A549 (cell line): ENCODE measurements at regions of chr20 and their contacts with region 1.

Region 1: GRCh38 chr20:16801919-16802911 is 54.1 kb downstream of the OTOR start:
- DNase-seq: peak; percentile 41 to 69
- ATAC-seq: peak; percentile 54 to 85; a peak in 4 of 6 replicates
- H3K4me3 ChIP-seq: peak overlapping the region; percentile 23; the same call in 2 of the 3 replicates
- H3K27ac ChIP-seq: no peak overlapping the region
- H3K4me1 ChIP-seq: peaks cover 5% of the 10 kb centered on the region; the same call in 2 of the 3 replicates
- CTCF ChIP-seq: peak; percentile 91
- EP300 ChIP-seq: no peak
- POLR2A ChIP-seq: no peak
- RAD21 ChIP-seq: peak; percentile 82 to 84

Region 2: GRCh38 chr20:16777126-16777525 is 25.1 kb before region 1 on chr20:
- CTCF ChIA-PET with region 1: interaction called, 20 read pairs
- POLR2A ChIA-PET with region 1: no interaction called
- DNase-seq: no peak
- ATAC-seq: no peak
- H3K4me3 ChIP-seq: no peak overlapping the region
- H3K27ac ChIP-seq: no peak overlapping the region
- H3K4me1 ChIP-seq: no peaks in the 10 kb centered on the region
- CTCF ChIP-seq: no peak
- EP300 ChIP-seq: no peak
- POLR2A ChIP-seq: no peak
- RAD21 ChIP-seq: no peak

Region 3: DNA sequence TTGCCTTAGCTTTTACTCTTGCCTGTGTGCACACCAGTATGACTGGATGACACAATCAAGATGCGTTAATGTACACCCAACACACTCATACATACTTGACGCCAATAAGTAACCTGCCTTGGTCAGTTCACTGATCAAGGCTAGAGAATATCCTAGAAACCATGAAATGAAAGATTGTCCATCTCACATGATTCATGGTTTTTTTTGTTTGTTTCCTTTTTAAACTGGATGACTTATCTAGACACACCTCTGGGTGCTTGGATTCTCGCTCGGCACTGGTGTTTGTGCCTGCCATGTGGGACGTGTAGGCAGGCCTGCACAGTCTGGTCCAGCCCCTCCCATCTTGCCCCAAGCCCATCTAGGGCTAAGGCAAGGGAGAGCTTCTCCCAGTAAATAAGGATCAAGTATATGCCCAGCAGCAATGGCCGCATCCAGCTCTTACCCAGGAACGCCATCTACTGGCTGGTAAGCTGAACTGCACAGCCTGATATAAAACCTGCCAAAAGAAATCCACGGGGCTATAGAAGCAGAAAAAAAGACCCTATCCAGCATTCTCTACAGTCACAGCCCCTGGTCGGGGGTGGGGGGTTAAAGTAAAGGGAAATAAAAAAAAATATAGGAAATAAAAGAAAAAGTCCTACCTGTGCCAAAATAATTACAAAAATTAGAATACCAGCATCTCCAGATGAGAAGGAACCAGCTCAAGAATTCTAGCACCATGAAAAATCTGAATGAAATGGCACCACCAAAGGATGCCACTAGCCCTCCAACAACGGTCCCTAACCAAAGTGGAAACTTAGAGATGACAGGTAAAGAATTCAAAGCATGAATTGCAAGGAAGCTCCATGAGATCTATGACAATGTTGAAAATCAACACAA is 19.2 kb after region 1 on chr20:
- CTCF ChIA-PET with region 1: interaction called, 187 read pairs
- POLR2A ChIA-PET with region 1: no interaction called
- DNase-seq: peak; percentile 37 to 65
- ATAC-seq: peak; percentile 62 to 88
- H3K4me3 ChIP-seq: no peak overlapping the region
- H3K27ac ChIP-seq: no peak overlapping the region
- H3K4me1 ChIP-seq: no peaks in the 10 kb centered on the region
- CTCF ChIP-seq: peak; percentile 67
- EP300 ChIP-seq: no peak
- POLR2A ChIP-seq: no peak
- RAD21 ChIP-seq: peak; percentile 50 to 61; a peak in 4 of 5 replicates

Region 4: DNA sequence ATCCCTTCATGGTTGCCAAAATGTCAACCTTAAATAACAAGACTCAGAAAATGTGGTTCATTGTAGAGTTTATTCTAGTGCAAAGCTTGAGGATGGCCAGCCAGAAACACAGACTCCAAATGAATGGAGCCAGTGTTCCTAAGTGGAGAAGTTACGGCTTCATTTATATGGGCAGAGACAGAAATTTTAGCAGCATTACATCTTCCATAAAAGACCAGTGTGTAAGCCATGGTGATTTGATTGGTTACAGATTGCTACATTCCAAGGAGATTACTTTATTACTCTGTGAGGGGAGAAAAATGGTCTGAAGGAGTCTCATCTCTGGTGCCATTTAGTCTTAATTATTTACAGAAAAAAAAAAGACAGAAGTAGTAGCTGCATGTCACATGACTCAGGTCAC is 43.8 kb after region 1 on chr20:
- CTCF ChIA-PET with region 1: interaction called, 12 read pairs
- POLR2A ChIA-PET with region 1: no interaction called
- DNase-seq: no peak
- ATAC-seq: no peak
- H3K4me3 ChIP-seq: no peak overlapping the region
- H3K27ac ChIP-seq: no peak overlapping the region
- H3K4me1 ChIP-seq: no peaks in the 10 kb centered on the region
- CTCF ChIP-seq: no peak
- EP300 ChIP-seq: no peak
- POLR2A ChIP-seq: no peak
- RAD21 ChIP-seq: no peak